Adrenal gland (tissue), 19 donors: ENCODE measurements at regions of chr17 and their contacts with region 1.

Region 1: DNA sequence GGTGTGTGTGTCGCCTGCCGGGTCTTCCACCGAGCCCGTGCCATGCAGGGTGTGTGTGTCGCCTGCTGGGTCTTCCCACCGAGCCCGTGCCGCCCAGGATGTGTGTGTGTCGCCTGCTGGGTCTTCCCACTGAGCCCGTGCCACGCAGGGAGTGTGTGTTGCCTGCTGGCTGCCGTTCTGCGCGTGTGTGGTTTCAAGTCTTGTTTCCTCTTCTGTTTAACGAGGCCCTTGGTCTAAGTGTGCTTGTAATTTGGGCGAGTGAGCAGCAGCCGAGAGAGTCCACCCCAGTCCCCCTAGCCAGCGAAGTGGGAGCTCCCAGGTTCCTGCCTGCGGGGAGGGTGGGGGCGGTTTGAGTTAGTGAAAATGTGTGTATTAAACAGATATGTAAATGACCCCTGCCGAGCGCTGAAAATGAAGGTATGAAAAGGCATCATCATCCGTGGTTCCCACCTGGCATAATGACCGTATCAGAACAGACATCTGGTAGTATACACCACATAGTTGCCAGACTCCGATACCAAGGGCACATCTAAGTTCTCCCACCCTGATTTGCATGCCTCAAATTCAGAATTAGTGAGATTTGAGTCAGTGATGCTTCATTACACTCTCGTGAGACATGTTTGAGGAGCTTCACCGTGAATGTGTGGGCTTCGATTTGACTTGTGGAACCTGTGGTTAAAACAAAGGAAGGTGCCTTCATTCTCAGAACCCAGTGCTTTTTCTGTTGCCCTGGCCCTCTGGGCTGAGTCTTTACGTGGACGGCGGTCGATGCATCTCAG is 114.5 kb upstream of the CHMP6 start:
- DNase-seq: peak in 2 of 7 donors; percentile 2 to 11
- H3K4me3 ChIP-seq: no peak overlapping the region
- H3K27ac ChIP-seq: no peak overlapping the region
- H3K4me1 ChIP-seq: peaks cover 0 to 19% of the 10 kb centered on the region in 2 donors
- H3K27me3 ChIP-seq: no peaks in the 10 kb centered on the region
- CTCF ChIP-seq: no peak
- POLR2A ChIP-seq: no peak

Region 2: GRCh38 chr17:81083125-81083765 is 206.1 kb after region 1 on chr17:
- intact Hi-C with region 1: loop called in 1 of 2 experiments (anchors 10 kb)
- DNase-seq: peak in 3 of 7 donors; percentile 46 to 82 (median 56)
- H3K4me3 ChIP-seq: no peak overlapping the region
- H3K27ac ChIP-seq: peak overlapping the region in 3 of 5 donors; percentile 7 to 78 (median 72)
- H3K4me1 ChIP-seq: peaks cover 0 to 17% of the 10 kb centered on the region in 2 donors
- H3K27me3 ChIP-seq: no peaks in the 10 kb centered on the region
- CTCF ChIP-seq: no peak
- POLR2A ChIP-seq: no peak